HAP-1 (cell line): ENCODE measurements at regions of chr9 and their contacts with region 1.

Region 1: DNA sequence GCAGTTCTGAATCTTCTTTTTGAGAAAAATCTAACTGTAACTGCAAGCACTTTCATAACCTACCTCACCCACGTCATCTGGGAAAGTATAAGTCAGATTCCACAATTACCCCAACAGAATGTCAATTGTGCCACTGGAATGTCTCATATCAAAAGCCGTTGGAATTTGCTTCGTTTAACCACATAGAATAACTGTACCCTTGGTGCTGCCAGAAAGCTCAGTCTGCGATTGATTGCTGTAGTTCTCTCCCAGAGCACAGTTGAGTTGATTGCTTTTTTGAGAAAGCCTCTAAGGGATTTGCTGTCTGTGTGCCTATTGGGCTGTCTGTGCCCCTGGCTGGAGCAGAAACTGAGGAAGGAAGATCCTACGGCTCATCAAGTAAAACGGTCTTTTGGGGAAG is 583.6 kb downstream of the TMEM38B start:
- DNase-seq: no peak
- H3K4me3 ChIP-seq: no peak overlapping the region
- H3K4me1 ChIP-seq: no peaks in the 10 kb centered on the region
- H3K27me3 ChIP-seq: no peaks in the 10 kb centered on the region

Region 2: DNA sequence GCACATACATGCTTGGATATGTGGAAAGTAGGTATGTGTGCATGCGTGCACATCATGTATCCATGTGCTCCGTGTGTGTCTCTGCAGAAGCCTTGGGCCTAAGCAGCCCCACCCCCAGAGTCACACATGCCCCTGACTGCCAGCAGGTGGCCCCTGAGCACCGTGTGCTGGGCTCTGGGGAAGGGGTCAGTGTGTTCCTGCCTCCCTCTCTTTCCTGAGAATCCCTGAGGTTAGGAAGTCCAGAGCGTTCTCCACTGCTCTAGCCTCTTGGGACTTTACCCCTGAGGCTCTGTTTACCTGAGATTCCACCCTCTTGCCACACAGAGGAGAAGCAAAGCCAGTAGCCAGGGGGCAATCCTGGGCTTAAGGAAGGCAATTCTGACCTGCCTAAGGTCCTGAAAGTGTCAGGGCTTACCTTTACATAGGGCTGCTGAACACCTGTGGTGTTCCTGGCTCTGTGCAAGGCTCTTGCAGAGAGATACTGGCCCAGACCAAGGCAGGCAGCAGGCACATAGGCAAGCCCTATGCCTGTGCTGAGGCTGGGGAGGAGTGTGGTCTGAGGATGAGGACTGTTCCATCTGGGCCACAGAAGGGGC is 376.4 kb before region 1 on chr9:
- in situ Hi-C with region 1: loop called (anchors 5 kb)
- DNase-seq: peak; percentile 84 to 85
- H3K4me3 ChIP-seq: no peak overlapping the region
- H3K4me1 ChIP-seq: peaks cover 7% of the 10 kb centered on the region
- H3K27me3 ChIP-seq: no peaks in the 10 kb centered on the region

Region 3: DNA sequence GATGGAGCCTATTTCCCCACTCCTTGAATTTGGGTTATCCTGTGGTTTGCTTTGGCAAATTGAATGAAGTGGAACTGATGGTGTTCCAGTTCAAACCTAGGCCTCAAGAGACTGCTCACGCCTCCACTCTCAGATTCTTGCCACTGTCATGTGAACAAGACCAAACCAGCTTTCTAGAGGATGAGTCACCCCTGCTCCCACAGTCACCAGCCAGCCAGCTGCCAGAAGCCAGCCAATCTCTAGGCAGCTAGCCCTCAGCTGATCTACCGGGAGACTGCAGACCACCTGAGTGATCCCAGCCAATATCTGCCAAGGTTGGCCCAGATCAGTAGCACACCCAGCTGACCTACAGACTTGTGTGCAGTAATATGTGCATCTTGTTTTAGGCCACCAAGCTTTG is 283.0 kb before region 1 on chr9:
- in situ Hi-C with region 1: no loop called
- DNase-seq: no peak
- H3K4me3 ChIP-seq: no peak overlapping the region
- H3K4me1 ChIP-seq: no peaks in the 10 kb centered on the region
- H3K27me3 ChIP-seq: no peaks in the 10 kb centered on the region